Natural killer cell (primary cell): ENCODE measurements at regions of chr12 and their contacts with region 1.

Region 1: GRCh38 chr12:109518820-109519665 is 41.6 kb downstream of the UBE3B start:
- DNase-seq: peak; percentile 47 to 76
- ATAC-seq: peak in 2 of 3 donors; percentile 72 to 81
- H3K4me3 ChIP-seq: no peak overlapping the region
- H3K4me3 Mint-ChIP-seq: no peak overlapping the region
- H3K27ac ChIP-seq: no peak overlapping the region
- H3K27ac Mint-ChIP-seq: no peak overlapping the region
- H3K4me1 ChIP-seq: no peaks in the 10 kb centered on the region
- H3K4me1 Mint-ChIP-seq: no peaks in the 10 kb centered on the region
- H3K27me3 ChIP-seq: no peaks in the 10 kb centered on the region
- H3K27me3 Mint-ChIP-seq: no peaks in the 10 kb centered on the region
- CTCF ChIP-seq: peak; percentile 89

Region 2: DNA sequence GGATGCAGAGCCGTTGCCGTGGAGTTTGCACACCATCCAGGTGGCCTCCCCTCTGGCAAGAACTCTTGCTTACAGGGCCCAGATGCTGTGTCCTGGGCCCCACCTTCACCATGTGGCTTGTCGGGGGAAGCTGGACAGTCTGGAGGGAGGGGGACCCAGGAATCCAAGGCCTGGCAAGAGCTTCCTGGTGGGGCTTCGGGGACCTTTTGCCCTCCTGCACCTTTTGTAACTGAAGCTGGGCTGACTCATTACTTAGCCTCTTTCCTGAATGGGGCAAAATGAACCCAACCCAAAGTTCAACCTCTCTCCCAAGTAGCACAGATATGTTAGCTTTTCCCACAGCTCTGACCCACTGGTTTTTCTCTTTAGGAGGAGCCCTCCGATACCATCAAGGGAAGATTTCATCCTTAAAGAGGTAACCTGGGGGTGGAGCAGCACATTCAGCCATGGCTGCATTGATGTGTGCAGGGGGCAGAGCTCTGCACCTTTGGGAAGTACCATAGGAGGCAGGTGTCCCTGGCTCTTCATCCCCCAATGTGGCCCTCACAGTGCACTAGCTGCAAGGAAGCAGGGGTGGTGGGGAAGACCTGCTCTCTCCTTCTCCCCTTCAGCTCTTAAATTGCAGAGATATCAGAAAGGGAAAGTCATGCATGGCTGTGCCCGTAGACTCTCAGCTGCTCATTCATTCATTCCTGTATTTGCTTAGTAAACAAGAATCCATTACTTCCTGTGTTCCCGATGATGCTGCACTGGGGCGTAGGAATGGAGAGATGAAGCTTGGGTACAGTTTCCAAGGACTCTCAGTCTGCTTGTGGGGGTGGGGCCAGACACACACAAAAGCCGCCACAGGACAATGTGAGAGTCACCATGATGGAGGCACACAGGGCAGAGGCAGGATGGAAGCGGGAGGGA is 67.6 kb after region 1 on chr12:
- intact Hi-C with region 1: no loop called
- DNase-seq: no peak
- ATAC-seq: no peak
- H3K4me3 ChIP-seq: no peak overlapping the region
- H3K4me3 Mint-ChIP-seq: no peak overlapping the region
- H3K27ac ChIP-seq: no peak overlapping the region
- H3K27ac Mint-ChIP-seq: no peak overlapping the region
- H3K4me1 ChIP-seq: no peaks in the 10 kb centered on the region
- H3K4me1 Mint-ChIP-seq: no peaks in the 10 kb centered on the region
- H3K27me3 ChIP-seq: no peaks in the 10 kb centered on the region
- H3K27me3 Mint-ChIP-seq: no peaks in the 10 kb centered on the region
- CTCF ChIP-seq: no peak

Region 3: GRCh38 chr12:109597795-109598427 is 78.9 kb after region 1 on chr12:
- intact Hi-C with region 1: loop called (anchors 2 kb)
- DNase-seq: peak; percentile 51 to 72
- ATAC-seq: peak; percentile 64 to 80 (median 68)
- H3K4me3 ChIP-seq: no peak overlapping the region
- H3K4me3 Mint-ChIP-seq: no peak overlapping the region
- H3K27ac ChIP-seq: no peak overlapping the region
- H3K27ac Mint-ChIP-seq: no peak overlapping the region
- H3K4me1 ChIP-seq: peaks cover 21% of the 10 kb centered on the region
- H3K4me1 Mint-ChIP-seq: peaks cover 8 to 16% of the 10 kb centered on the region in 2 donors
- H3K27me3 ChIP-seq: no peaks in the 10 kb centered on the region
- H3K27me3 Mint-ChIP-seq: no peaks in the 10 kb centered on the region
- CTCF ChIP-seq: peak; percentile 88

Region 4: DNA sequence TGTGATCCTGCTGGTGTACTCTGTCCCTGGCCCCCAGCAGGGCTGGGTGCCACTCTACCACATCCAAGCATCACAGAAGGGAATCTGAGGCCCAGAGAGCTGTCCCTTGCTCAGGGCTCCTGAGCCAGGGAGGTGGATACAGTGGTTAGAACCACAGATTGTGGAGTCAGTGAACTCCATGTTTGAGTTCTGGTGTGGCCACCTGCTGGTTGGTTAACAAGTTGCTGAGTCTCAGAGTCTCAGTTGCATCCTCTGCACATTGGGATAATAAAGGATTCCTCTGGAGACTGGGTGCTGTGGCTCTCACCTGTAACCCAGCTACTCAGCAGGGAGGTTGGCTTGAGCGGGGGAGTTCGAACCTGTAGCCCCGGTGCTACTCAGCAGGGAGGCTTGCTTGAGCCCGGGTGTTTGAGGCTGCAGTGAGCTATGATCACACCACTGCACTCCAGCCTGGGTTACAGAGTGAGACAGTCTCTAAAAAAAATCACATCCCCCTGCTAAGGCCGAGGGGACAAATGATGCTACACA is 94.0 kb after region 1 on chr12:
- intact Hi-C with region 1: loop called (anchors 2 kb)
- DNase-seq: no peak
- ATAC-seq: no peak
- H3K4me3 ChIP-seq: no peak overlapping the region
- H3K4me3 Mint-ChIP-seq: no peak overlapping the region
- H3K27ac ChIP-seq: no peak overlapping the region
- H3K27ac Mint-ChIP-seq: no peak overlapping the region
- H3K4me1 ChIP-seq: no peaks in the 10 kb centered on the region
- H3K4me1 Mint-ChIP-seq: no peaks in the 10 kb centered on the region
- H3K27me3 ChIP-seq: no peaks in the 10 kb centered on the region
- H3K27me3 Mint-ChIP-seq: peaks cover 9 to 20% of the 10 kb centered on the region in 2 donors
- CTCF ChIP-seq: no peak

Region 5: DNA sequence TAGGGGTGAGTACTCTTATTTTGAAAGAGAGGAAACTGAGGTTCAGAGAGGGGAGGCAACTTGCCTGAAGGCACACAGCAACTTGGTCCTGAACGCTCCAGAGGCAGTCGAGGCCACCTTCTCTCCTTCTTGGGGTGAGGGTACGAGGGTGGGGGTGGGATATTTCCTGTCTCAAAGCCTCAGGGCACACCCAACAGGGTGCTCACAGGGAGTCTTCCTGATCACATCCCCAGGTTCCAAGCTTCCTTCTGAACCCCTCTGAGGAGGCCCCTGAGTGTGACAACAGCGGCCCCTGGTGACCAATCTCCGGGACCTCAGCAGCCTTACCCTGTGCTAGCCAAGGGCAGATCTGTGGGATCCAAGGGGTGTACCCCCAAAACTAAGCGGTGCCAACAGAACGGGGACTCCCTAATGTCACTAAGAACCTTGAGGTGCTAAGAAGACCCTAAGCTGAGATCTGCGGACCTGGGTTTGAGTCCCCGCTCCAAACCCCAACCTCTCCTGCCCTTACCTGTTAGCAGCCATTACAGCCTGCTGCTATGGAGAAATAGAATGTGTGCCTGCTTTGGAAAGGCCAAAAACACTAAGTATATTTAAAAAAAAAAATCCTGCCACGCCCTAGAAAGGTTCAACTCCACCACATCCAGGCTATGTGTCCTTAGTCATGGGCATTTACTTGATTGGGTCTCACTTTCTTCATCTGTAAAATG is 256.3 kb after region 1 on chr12:
- intact Hi-C with region 1: loop called (anchors 1 kb)
- DNase-seq: peak; percentile 63 to 81
- ATAC-seq: peak; percentile 74 to 91 (median 86)
- H3K4me3 ChIP-seq: no peak overlapping the region
- H3K4me3 Mint-ChIP-seq: no peak overlapping the region
- H3K27ac ChIP-seq: no peak overlapping the region
- H3K27ac Mint-ChIP-seq: no peak overlapping the region
- H3K4me1 ChIP-seq: no peaks in the 10 kb centered on the region
- H3K4me1 Mint-ChIP-seq: peaks cover 5 to 10% of the 10 kb centered on the region in 2 donors
- H3K27me3 ChIP-seq: no peaks in the 10 kb centered on the region
- H3K27me3 Mint-ChIP-seq: peaks cover 0 to 4% of the 10 kb centered on the region in 2 donors
- CTCF ChIP-seq: peak; percentile 86